ENCODE measurements at regions of chr12 and their contacts with region 1.

Region 1: DNA sequence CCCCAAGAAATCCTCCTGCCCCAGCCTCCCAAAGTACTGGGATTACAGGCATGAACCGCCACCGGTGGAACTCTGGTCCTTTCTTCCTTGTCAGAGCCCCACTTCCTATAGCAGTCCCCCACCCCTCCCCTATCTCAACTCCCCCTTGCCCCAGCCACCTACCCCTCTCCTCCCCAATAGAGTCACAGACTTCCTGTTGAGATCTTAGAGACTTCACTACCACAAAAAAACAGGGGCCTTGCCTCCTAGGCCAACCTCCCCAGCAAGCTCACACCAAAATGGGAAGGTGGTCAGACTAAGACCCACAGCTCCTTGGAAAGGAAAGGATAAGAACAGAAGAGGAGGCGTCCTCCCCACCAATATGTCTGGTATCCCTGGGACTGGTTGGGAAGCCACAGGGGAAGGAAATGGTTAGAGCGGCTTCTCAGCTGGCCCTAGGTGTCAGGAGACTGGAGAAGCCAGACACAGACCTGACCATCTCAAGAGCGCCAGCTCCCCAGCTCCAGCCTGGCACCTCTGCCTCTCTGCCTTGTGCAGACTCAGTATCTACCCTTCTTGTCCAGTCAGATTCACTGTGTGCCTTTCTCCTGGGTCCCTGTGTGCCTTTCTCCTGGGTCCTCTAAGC is 8.5 kb downstream of the ITGB7 start:
- DNase-seq: no peak
- H3K4me3 ChIP-seq: no peak overlapping the region
- H3K27ac ChIP-seq: no peak overlapping the region
- H3K4me1 ChIP-seq: peaks cover 0 to 12% (median 10%) of the 10 kb centered on the region in 4 donors
- H3K27me3 ChIP-seq: no peaks in the 10 kb centered on the region
- CTCF ChIP-seq: no peak
- EP300 ChIP-seq: no peak
- POLR2A ChIP-seq: no peak

Region 2: DNA sequence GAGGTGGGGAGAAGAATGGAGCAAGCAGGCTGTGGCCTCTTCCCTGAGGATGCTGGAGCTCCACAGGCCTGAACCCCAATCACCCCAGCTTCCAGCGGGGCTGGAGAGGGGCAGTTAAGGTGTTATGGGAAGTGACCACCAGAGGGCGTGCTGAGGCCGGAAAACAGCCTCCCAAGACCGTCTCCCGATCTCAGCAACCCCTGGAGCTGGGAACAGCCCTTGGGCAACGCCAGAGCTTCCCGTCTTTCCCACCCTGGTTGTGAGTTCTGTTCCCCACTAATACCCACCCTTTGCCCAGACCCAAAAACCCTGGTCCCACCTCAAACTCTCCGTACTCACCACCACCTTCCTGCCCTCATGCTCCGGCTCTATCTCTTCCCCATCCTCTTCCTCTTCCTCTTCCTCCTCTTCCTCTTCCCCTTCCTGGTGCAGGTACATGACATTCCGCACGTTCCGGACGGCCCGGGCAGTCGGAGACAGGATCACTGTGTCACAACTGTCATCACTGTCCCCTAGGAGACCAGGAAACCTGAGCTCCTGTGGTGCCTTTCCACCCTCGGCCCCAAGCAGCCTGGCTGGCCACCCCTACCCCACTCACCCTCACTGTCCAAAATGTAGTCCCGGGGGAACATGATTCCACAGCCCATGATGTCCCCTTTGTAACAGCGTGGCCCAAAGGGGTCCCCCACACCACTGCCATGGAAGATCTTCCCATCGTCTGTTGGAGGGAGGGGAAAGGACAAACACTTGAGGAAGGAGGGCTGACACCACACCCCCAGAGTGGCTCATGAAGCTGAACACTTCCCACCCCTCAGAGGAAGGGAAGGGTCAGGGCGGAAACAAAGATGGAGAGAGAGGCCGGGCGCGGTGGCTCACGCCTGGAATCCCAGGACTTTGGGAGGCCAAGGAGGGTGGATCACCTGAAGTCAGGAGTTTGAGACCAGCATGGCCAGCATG is 132.3 kb before region 1 on chr12:
- intact Hi-C with region 1: loop called (anchors 5 kb)
- DNase-seq: peak; percentile 95
- H3K4me3 ChIP-seq: no peak overlapping the region
- H3K27ac ChIP-seq: peak overlapping the region; percentile 64 to 83 (median 66)
- H3K4me1 ChIP-seq: peaks cover 0 to 66% (median 48%) of the 10 kb centered on the region in 4 donors
- H3K27me3 ChIP-seq: no peaks in the 10 kb centered on the region
- CTCF ChIP-seq: peak; percentile 82 to 95 (median 90)
- EP300 ChIP-seq: no peak
- POLR2A ChIP-seq: no peak

Region 3: DNA sequence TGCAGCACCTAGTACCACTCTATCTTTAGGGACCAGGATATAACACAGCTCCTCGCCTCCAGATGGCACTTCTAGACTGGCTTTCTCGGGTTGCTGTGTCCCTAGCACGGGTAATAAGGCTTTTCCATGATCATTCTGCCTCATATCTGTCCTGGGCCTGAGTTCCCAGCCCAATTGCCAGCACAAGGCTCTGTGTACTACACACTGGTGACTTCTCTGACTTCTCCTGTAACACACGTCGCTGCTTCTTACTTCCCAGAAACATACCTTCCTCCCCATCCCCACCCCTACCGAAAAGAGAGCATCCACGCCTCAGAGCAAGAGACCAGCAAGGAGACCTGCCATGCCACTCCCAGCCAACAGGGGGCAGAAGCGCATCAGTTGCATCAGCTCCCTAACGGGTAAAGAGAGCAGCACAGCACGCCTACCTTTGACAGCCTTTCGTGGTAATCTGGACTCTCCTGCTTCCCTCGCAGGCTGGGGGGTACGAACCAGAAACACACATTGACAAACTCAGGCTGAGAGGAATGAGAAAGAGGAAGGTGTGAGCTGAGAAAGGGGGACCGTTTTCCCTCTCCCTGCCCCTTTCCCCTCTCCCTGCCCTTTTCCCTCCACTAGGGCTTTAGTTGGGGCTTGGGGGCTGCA is 39.3 kb before region 1 on chr12:
- intact Hi-C with region 1: loop called (anchors 1 kb)
- DNase-seq: peak; percentile 92
- H3K4me3 ChIP-seq: no peak overlapping the region
- H3K27ac ChIP-seq: peak overlapping the region in 1 of 4 donors; percentile 80
- H3K4me1 ChIP-seq: peaks cover 0 to 4% (median 4%) of the 10 kb centered on the region in 4 donors
- H3K27me3 ChIP-seq: no peaks in the 10 kb centered on the region
- CTCF ChIP-seq: peak; percentile 93 to 100 (median 98)
- EP300 ChIP-seq: no peak
- POLR2A ChIP-seq: no peak

Measured in sigmoid colon (tissue), 7 donors.